BJ (cell line): ENCODE measurements at regions of chr21 and their contacts with region 1.

Region 1: GRCh38 chr21:44949779-44950198 is 10.0 kb downstream of the SLX9 start:
- DNase-seq: no peak
- H3K4me3 ChIP-seq: no peak overlapping the region
- H3K27me3 ChIP-seq: no peaks in the 10 kb centered on the region
- CTCF ChIP-seq: peak; percentile 91

Region 2: DNA sequence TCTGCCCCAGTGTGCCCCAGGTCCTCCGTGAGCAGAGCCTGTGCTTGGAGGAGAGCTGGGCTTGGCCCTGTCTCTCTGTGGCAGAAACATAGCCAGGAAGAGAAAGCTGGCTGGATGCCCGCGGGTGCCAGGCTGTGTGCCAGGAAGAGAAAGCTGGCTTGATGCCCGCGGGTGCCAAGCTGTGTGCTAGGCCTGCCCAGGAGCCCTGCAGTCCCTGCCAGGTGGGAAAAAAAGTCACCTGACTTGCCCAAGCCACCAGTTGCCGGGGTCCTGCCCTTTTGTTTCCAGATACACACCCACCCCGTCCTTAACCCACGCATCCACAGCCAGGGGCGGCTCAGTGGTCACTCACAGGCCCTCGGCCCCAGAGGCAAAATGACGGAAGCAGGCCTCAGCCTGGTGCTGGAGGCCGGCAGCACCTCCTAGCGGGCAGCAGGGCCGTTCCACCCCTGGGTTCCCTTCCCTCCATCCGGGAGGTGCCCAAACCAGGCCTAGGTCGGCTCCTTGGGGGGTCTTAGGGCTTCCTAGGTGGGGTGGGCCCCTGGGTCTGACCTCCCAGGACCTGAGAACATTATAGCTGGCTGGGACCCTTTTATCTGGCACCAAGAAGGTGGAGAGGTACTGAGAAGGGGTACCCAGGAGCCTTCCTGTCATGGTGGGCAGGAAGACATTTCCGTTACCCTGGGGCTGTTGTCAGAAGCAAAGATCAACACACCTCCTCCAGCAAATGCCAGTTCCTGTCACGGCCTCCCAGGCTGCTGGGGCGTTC is 38.2 kb before region 1 on chr21:
- CTCF ChIA-PET with region 1: no interaction called
- POLR2A ChIA-PET with region 1: no interaction called
- DNase-seq: no peak
- H3K4me3 ChIP-seq: no peak overlapping the region
- H3K27me3 ChIP-seq: peaks cover 28% of the 10 kb centered on the region
- CTCF ChIP-seq: 0 out of 2 replicates have a peak, but pooled peaks have one; percentile 11

Region 3: GRCh38 chr21:45074818-45075595 is 125.2 kb after region 1 on chr21:
- CTCF ChIA-PET with region 1: interaction called, 16 read pairs
- POLR2A ChIA-PET with region 1: no interaction called
- DNase-seq: no peak
- H3K4me3 ChIP-seq: peak overlapping the region; percentile 79
- H3K27me3 ChIP-seq: no peaks in the 10 kb centered on the region
- CTCF ChIP-seq: no peak

Region 4: DNA sequence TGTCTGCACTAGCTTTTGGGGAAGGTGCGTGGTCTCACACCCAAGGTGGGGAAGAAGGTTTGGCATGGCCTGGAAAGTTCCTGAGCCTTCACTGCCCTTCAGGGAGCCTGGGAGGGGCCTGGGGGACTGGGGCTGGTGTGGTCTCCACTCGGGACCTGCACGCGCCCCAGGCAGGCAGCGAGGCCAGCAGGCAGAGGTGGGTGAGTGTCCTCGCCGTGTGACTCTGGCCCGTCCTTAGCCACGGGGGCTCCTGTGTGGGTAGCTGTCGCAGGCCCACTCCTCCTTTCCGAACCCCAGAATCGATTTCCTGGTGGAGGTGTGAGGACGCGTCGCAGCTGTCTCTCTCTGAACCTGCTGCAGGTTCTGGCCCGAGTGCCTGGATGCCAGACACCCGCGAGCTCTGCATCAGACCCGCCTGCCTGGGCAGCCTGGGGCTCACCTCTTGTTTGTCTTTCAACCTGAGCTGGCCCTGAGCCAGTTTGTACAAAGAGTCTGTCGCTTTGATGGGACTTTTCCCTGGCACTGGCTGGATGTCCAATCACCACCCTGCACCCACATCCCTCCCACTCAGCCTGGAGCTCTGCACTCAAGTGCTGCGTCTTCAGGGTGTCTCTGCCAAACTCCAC is 628.5 kb after region 1 on chr21:
- CTCF ChIA-PET with region 1: no interaction called
- POLR2A ChIA-PET with region 1: no interaction called
- DNase-seq: no peak
- H3K4me3 ChIP-seq: no peak overlapping the region
- H3K27me3 ChIP-seq: peaks cover 6% of the 10 kb centered on the region; the same call in 1 of the 2 replicates
- CTCF ChIP-seq: no peak